ENCODE measurements at regions of chr1 and their contacts with region 1.

Region 1: GRCh38 chr1:234631721-234632125 is 21.7 kb upstream of the IRF2BP2 start:
- DNase-seq: peak; percentile 90
- ATAC-seq: peak; percentile 66
- H3K4me3 ChIP-seq: no peak overlapping the region
- H3K27ac ChIP-seq: peak overlapping the region; percentile 60
- H3K4me1 ChIP-seq: peaks cover 80% of the 10 kb centered on the region
- H3K27me3 ChIP-seq: no peaks in the 10 kb centered on the region
- CTCF ChIP-seq: no peak
- EP300 ChIP-seq: peak in 1 of 2 experiments; percentile 82; a peak in 2 of 4 replicates
- POLR2A ChIP-seq: no peak
- RAD21 ChIP-seq: no peak

Region 2: DNA sequence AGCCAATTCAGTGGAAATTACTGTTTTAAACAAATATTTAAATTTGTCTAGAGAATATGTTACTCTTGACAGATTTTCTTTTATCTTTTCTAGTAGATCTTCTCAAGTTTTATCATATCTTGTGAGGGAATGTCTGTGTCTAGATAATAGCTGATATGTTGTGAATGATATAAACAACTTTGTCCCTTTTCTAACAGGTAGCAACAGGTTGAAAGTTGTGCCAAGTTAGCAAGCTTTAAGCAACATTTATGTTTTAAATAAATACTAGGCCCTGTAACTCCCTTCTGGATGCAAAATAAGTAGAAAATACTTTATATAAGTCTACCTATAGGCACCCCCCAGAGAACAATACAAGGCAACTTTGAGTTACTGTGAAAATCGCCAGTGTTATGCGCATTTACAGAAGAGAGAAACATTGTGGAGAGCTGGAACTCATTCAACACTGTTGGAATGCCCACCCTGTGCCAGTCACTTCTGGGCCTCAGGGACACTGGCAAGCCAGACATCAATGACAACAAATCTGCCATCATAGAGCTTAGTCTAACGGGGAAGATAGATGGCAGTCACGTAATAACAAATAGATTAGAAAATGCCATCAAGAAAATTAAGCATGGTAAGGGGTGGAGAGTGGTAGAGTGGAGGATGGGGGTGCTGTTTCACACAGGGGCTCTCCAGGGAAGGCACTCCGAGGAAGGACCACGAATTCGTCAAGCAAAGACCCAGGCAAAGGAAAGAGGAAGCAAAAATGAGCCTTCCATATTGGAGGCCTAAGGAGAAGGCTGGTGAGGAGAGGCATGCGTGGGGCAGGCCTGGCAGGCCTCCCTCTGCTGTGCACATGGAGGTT is 1299.8 kb before region 1 on chr1:
- CTCF ChIA-PET with region 1: no interaction called
- POLR2A ChIA-PET with region 1: no interaction called
- in situ Hi-C with region 1: no loop called
- intact Hi-C with region 1: no loop called
- DNase-seq: no peak
- ATAC-seq: no peak
- H3K4me3 ChIP-seq: no peak overlapping the region
- H3K27ac ChIP-seq: no peak overlapping the region
- H3K4me1 ChIP-seq: no peaks in the 10 kb centered on the region
- H3K27me3 ChIP-seq: no peaks in the 10 kb centered on the region
- CTCF ChIP-seq: no peak
- EP300 ChIP-seq: no peak
- POLR2A ChIP-seq: no peak
- RAD21 ChIP-seq: no peak

Region 3: GRCh38 chr1:234617131-234617985 is 14.4 kb before region 1 on chr1:
- CTCF ChIA-PET with region 1: no interaction called
- POLR2A ChIA-PET with region 1: interaction called, 61 read pairs
- in situ Hi-C with region 1: no loop called
- intact Hi-C with region 1: loop called (anchors 1 kb)
- DNase-seq: no peak
- ATAC-seq: no peak
- H3K4me3 ChIP-seq: no peak overlapping the region
- H3K27ac ChIP-seq: peak overlapping the region; percentile 99
- H3K4me1 ChIP-seq: peaks cover 97% of the 10 kb centered on the region
- H3K27me3 ChIP-seq: no peaks in the 10 kb centered on the region
- CTCF ChIP-seq: no peak
- EP300 ChIP-seq: no peak
- POLR2A ChIP-seq: no peak
- RAD21 ChIP-seq: no peak